ENCODE measurements at regions of chrX and their contacts with region 1.

Region 1: DNA sequence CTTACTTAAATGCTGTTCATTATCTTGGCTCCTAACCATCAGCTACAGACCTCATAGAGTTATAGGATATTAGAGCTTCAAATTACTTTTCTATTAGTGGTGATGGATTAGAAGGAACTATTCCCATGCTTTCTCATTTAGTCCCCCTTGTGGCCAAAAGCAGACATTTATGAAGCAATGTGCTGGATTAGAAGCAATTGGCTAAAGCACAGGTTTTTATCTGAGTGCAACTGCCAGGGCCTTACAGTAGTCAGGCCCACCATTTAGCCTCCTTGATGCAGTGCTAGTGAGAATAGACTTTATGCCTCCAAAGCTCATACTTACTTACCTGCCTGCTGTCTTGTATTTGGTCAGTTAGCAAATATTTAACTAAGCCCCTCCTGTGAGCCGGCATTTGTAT is 93.0 kb downstream of the TSPAN7 start:
- DNase-seq: peak; percentile 7
- ATAC-seq: peak; percentile 61
- H3K4me3 ChIP-seq: no peak overlapping the region
- H3K27ac ChIP-seq: no peak overlapping the region
- H3K4me1 ChIP-seq: no peaks in the 10 kb centered on the region
- H3K27me3 ChIP-seq: no peaks in the 10 kb centered on the region
- CTCF ChIP-seq: peak; percentile 25 to 47 (median 41); a peak in 5 of 6 replicates
- POLR2A ChIP-seq: no peak
- RAD21 ChIP-seq: peak; percentile 36

Region 2: GRCh38 chrX:38458071-38458470 is 196.2 kb before region 1 on chrX:
- CTCF ChIA-PET with region 1: interaction called, 3 read pairs
- POLR2A ChIA-PET with region 1: no interaction called
- RAD21 ChIA-PET with region 1: no interaction called
- intact Hi-C with region 1: loop called (anchors 1 kb)
- DNase-seq: no peak
- ATAC-seq: no peak
- H3K4me3 ChIP-seq: no peak overlapping the region
- H3K27ac ChIP-seq: no peak overlapping the region
- H3K4me1 ChIP-seq: no peaks in the 10 kb centered on the region
- H3K27me3 ChIP-seq: no peaks in the 10 kb centered on the region
- CTCF ChIP-seq: peak in 1 of 3 experiments; percentile 14; a peak in 1 of 6 replicates
- POLR2A ChIP-seq: no peak
- RAD21 ChIP-seq: peak; percentile 33; the same call in 1 of the 2 replicates

Region 3: DNA sequence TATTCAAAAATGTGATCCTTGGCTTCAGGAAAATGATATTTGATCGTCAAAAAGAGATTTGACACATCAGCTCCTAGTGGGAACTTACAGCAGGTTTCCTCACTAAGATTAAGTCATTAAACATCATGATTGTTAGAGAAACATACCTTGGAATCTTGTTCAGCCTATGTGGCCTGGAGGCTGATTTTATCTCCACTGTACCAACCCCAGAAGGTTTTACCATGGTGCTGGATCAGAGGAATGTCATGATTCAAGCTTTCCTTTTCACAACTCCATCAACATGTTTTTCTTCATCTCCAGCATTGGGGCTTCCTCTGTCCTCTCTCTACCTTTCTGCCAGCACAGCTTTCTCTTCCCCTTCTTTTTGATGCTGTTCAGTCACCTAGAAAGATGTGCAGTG is 78.6 kb after region 1 on chrX:
- CTCF ChIA-PET with region 1: no interaction called
- POLR2A ChIA-PET with region 1: no interaction called
- RAD21 ChIA-PET with region 1: no interaction called
- intact Hi-C with region 1: no loop called
- DNase-seq: no peak
- ATAC-seq: no peak
- H3K4me3 ChIP-seq: no peak overlapping the region
- H3K27ac ChIP-seq: no peak overlapping the region
- H3K4me1 ChIP-seq: no peaks in the 10 kb centered on the region
- H3K27me3 ChIP-seq: no peaks in the 10 kb centered on the region
- CTCF ChIP-seq: no peak
- POLR2A ChIP-seq: no peak
- RAD21 ChIP-seq: no peak